Sigmoid colon (tissue), 7 donors: ENCODE measurements at regions of chr10 and their contacts with region 1.

Region 1: DNA sequence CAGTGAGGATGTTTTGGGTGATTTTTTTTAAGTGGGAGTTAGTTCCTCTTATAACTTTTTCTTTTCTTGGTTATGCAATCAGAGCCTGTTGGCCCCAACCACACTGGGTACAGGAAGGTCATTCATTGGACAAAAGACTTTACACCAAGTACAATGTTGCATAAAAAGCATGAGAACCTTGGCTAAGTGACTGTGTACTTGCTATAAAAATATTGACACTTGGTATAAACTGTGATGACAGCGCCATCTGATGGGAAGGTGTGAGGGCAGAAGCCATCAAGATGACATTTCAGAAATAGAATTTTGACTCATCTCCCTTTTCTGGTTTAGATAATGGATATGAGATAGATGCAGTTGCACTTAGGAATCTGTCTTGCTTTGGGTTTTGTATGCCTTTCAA is 126.4 kb upstream of the CCDC6 start:
- DNase-seq: no peak
- H3K4me3 ChIP-seq: no peak overlapping the region
- H3K27ac ChIP-seq: peak overlapping the region in 1 of 4 donors; percentile 16
- H3K4me1 ChIP-seq: peaks cover 0 to 16% (median 9%) of the 10 kb centered on the region in 4 donors
- H3K27me3 ChIP-seq: no peaks in the 10 kb centered on the region
- CTCF ChIP-seq: peak in 1 of 4 experiments; percentile 39
- EP300 ChIP-seq: no peak
- POLR2A ChIP-seq: no peak

Region 2: GRCh38 chr10:59830601-59831259 is 202.0 kb before region 1 on chr10:
- intact Hi-C with region 1: loop called (anchors 10 kb)
- DNase-seq: no peak
- H3K4me3 ChIP-seq: no peak overlapping the region
- H3K27ac ChIP-seq: no peak overlapping the region
- H3K4me1 ChIP-seq: peaks cover 0 to 32% (median 30%) of the 10 kb centered on the region in 4 donors
- H3K27me3 ChIP-seq: no peaks in the 10 kb centered on the region
- CTCF ChIP-seq: peak; percentile 19 to 78 (median 56)
- EP300 ChIP-seq: no peak
- POLR2A ChIP-seq: no peak

Region 3: DNA sequence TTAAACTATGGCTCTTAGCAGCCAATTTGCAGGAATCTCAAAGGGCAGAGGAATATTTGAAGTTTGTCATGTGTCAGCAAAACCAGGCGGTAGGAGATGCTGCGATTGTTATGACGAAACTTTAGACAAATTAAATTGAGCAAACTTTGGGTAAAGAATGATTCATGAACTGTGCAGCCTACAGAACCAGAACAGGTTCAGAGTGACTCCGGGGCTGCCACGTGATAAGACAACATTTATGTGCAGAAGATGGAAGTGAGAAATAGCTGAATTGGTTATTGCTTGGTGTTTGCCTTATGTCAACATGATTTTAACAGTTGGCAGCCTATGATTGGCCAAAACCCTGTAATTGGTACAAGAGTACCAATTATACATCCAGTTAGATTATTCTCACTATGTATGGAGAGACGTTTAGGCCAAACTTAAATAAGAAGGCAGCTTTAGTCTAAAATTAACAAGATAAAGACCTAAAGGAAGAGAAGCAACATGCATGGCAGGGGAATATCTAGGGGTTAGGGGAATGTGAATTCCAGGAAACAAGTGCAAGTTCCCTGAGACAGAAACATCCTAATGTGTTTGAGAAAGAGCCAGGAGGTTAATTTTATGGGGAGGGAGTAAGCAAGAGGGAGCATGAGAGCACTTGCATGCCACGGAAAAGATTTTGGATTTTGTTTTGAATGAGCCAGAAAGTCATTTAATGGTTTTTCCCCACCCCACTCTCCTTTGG is 86.9 kb before region 1 on chr10:
- intact Hi-C with region 1: no loop called
- DNase-seq: no peak
- H3K4me3 ChIP-seq: no peak overlapping the region
- H3K27ac ChIP-seq: no peak overlapping the region
- H3K4me1 ChIP-seq: no peaks in the 10 kb centered on the region
- H3K27me3 ChIP-seq: no peaks in the 10 kb centered on the region
- CTCF ChIP-seq: no peak
- EP300 ChIP-seq: no peak
- POLR2A ChIP-seq: no peak

Region 4: GRCh38 chr10:60073781-60074656 is 41.3 kb after region 1 on chr10:
- intact Hi-C with region 1: no loop called
- DNase-seq: no peak
- H3K4me3 ChIP-seq: no peak overlapping the region
- H3K27ac ChIP-seq: no peak overlapping the region
- H3K4me1 ChIP-seq: no peaks in the 10 kb centered on the region
- H3K27me3 ChIP-seq: no peaks in the 10 kb centered on the region
- CTCF ChIP-seq: no peak
- EP300 ChIP-seq: no peak
- POLR2A ChIP-seq: no peak